ENCODE measurements at regions of chr3 and their contacts with region 1.

Region 1: GRCh38 chr3:197186887-197187588 is 111.4 kb downstream of the DLG1 start:
- DNase-seq: peak; percentile 52
- CTCF ChIP-seq: peak; percentile 68

Region 2: DNA sequence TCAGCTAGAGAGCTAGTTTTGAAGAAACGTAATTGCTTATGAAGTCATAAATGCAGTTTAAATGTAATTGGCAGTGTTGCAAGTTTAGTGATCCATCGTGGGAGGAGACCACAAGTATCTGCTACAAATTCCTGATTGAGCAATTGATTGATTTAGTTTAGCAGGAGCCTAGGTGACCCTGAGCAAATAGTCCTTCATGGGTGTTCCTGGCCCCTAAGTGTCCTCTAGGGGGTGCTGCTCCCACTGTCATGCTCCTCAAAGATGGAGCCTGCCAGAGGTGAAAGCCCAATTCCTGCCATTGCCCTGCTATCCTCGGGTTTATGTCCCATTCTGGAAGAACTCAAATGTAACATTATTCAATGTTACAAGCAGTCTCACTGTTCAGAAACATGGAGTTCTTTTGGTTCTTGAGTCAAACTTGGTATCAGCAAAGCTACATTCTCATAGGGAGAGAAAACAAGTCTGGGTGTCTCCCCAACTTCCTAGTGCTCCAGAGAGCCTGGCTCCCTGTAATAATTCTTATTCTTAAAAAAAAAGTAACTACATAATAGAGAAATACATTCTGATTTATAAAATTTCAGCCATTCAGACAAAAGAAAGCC is 349.1 kb before region 1 on chr3:
- in situ Hi-C with region 1: loop called (anchors 25 kb)
- DNase-seq: peak; percentile 80
- CTCF ChIP-seq: peak; percentile 72

Region 3: DNA sequence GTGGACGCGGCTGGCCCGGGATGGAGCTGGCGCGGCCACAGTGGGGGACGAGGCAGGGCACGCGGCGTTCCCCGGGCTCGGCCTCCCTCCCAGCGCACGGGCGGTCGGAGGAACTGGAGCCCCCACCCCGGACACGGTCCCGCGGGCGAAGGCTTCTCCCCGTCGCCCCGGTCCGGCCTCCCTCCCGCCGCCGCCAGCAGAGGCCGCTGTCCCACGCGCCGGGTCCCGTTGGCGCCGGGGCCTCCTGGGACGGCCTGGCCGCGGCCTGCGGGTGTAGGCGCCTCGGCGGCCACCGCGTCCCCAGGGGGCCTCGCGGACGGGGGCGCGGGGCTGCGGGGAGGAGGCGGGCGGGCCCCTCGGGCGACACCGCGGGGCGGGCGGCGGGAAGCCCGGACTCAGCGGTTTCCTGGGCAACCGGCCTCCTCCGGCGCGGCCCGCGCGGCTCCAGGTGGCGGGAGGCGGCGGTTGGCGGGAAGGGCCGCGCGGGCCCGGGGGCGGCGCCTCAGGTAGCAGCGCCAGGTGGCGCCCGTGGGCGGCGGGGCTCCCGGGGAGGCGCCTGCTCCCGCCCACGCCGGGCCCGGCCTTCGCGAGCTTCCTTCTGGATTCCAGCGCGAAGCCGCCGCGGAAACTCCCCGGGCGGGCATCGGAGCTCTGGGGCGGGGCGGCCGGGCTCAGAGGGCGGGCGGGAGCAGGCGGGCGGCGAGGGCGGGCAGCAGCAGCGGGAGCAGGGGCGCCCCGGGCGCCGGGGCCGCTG is 184.2 kb before region 1 on chr3:
- in situ Hi-C with region 1: loop called (anchors 25 kb)
- DNase-seq: peak; percentile 95
- CTCF ChIP-seq: peak; percentile 94

Region 4: GRCh38 chr3:197478746-197479668 is 292.0 kb after region 1 on chr3:
- in situ Hi-C with region 1: no loop called
- DNase-seq: no peak
- CTCF ChIP-seq: no peak

Region 5: GRCh38 chr3:197547306-197548011 is 360.4 kb after region 1 on chr3:
- in situ Hi-C with region 1: no loop called
- DNase-seq: no peak
- CTCF ChIP-seq: no peak

Region 6: GRCh38 chr3:197926418-197926817 is 739.4 kb after region 1 on chr3:
- in situ Hi-C with region 1: no loop called
- DNase-seq: no peak
- CTCF ChIP-seq: no peak

Measured in GM13976 (cell line).